Aorta (tissue), 5 donors: ENCODE measurements at regions of chr21 and their contacts with region 1.

Region 1: GRCh38 chr21:34526618-34527290 is 14.7 kb upstream of the KCNE1 start:
- DNase-seq: peak; percentile 85 to 87
- ATAC-seq: peak; percentile 91
- H3K4me3 ChIP-seq: peak overlapping the region; percentile 65 to 78
- H3K27ac ChIP-seq: peak overlapping the region; percentile 73 to 98
- H3K4me1 ChIP-seq: peaks cover 0 to 4% of the 10 kb centered on the region in 2 donors
- H3K27me3 ChIP-seq: no peaks in the 10 kb centered on the region

Region 2: GRCh38 chr21:34561806-34562205 is 35.1 kb after region 1 on chr21:
- intact Hi-C with region 1: loop called in 1 of 2 experiments (anchors 5 kb)
- DNase-seq: no peak
- ATAC-seq: no peak
- H3K4me3 ChIP-seq: no peak overlapping the region
- H3K27ac ChIP-seq: no peak overlapping the region
- H3K4me1 ChIP-seq: no peaks in the 10 kb centered on the region
- H3K27me3 ChIP-seq: no peaks in the 10 kb centered on the region

Region 3: DNA sequence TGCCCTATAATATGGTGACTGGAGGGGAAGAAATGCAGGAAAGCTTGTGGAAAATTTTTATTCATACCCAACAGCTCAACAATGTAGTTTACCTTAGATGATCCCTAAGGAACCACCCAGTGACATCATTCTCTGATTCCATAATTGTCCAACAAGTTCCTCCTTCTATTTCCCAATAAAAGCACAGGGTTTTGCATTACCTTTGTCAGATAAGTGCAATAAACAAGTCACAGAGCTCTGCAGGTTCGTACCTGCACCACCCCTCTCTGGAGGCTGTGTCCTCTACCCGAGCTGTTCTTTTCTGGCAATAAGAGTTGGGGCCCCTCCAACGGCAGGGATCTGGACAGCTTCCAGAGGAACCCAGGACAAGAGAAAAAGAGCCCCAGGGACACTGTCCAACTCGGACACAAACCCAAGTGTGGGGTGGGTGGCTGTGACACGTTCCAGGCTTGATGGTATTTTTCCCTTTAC is 49.3 kb after region 1 on chr21:
- intact Hi-C with region 1: loop called in 1 of 2 experiments (anchors 2 kb)
- DNase-seq: no peak
- ATAC-seq: peak; percentile 10
- H3K4me3 ChIP-seq: no peak overlapping the region
- H3K27ac ChIP-seq: peak overlapping the region; percentile 1 to 37
- H3K4me1 ChIP-seq: peaks cover 0 to 5% of the 10 kb centered on the region in 2 donors
- H3K27me3 ChIP-seq: no peaks in the 10 kb centered on the region

Region 4: GRCh38 chr21:34595457-34595856 is 68.7 kb after region 1 on chr21:
- intact Hi-C with region 1: loop called (anchors 2 to 5 kb)
- DNase-seq: no peak
- ATAC-seq: peak; percentile 33
- H3K4me3 ChIP-seq: no peak overlapping the region
- H3K27ac ChIP-seq: no peak overlapping the region
- H3K4me1 ChIP-seq: no peaks in the 10 kb centered on the region
- H3K27me3 ChIP-seq: no peaks in the 10 kb centered on the region

Region 5: GRCh38 chr21:34603002-34603709 is 76.4 kb after region 1 on chr21:
- intact Hi-C with region 1: loop called in 1 of 2 experiments (anchors 5 kb)
- DNase-seq: peak; percentile 90 to 94
- ATAC-seq: peak; percentile 93
- H3K4me3 ChIP-seq: no peak overlapping the region
- H3K27ac ChIP-seq: no peak overlapping the region
- H3K4me1 ChIP-seq: no peaks in the 10 kb centered on the region
- H3K27me3 ChIP-seq: no peaks in the 10 kb centered on the region

Region 6: GRCh38 chr21:35113064-35113463 is 586.3 kb after region 1 on chr21:
- intact Hi-C with region 1: no loop called
- DNase-seq: no peak
- ATAC-seq: no peak
- H3K4me3 ChIP-seq: no peak overlapping the region
- H3K27ac ChIP-seq: no peak overlapping the region
- H3K4me1 ChIP-seq: no peaks in the 10 kb centered on the region
- H3K27me3 ChIP-seq: no peaks in the 10 kb centered on the region